ENCODE measurements at regions of chr14 and their contacts with region 1.

Region 1: DNA sequence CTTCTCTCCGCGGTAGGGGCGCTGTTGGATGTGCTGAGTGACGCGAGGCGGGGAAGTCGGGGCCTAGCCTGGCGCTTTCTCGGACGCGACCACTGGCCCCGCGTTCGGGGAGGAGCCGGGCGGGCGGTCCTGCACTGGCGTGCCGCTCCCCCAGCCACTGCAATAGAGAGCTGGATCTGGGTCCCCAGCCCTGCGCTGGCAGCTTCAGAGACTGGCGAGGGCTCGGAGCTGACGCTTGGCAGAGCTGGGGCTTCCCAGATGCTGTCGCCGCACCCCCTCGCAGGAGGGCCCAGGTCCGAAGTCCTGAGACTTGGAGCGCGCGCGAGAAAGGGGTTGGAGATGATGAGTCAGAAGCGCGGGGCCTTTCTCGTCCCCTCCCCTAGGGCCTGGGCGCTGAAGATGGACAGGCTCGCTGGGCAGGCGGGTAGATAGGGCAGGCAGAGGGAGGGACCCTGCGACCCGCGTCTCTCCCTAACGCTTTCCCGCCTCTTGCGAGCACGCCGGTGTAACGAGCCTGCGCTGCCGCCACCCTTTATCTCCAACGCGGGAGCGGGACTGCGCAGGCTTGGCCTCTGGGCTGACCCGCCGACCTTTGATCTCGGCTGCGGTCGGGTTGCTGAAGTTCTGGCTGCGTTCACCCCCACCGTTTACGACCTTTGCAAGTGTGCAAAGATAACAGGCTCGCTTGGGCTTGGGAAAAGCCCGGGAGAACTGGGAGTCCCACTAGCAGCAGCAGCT is 3.0 kb downstream of the TMEM253 start:
- DNase-seq: peak; percentile 95 to 97 (median 96)
- H3K4me3 ChIP-seq: peak overlapping the region; percentile 57
- H3K27ac ChIP-seq: peak overlapping the region; percentile 93 to 96
- H3K4me1 ChIP-seq: peaks cover 4% of the 10 kb centered on the region
- H3K27me3 ChIP-seq: no peaks in the 10 kb centered on the region
- CTCF ChIP-seq: peak; percentile 77 to 95 (median 92)
- EP300 ChIP-seq: no peak
- POLR2A ChIP-seq: peak; percentile 69

Region 2: DNA sequence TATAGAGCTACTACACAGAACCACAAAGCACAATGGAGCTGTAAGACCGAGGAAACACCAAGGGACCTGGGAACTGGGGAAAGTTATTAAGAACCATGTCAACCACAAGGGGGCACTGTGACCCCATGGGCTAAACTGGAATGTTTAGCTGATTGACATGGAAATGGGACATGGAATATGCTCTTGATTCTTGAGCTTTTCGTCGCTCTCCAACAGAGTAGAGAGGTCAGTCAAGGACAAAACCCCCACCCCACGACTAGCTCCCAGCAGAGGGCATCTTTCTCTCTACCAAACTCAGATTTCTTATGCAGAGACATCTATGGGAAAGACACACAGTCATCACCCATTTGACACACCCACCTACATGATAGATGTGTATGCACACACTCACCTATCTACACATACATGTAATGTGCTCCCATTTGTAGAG is 89.1 kb before region 1 on chr14:
- intact Hi-C with region 1: loop called in 1 of 4 experiments (anchors 10 kb)
- DNase-seq: peak; percentile 81 to 92 (median 87)
- H3K4me3 ChIP-seq: no peak overlapping the region
- H3K27ac ChIP-seq: peak overlapping the region in 1 of 2 donors; percentile 16
- H3K4me1 ChIP-seq: peaks cover 5% of the 10 kb centered on the region
- H3K27me3 ChIP-seq: no peaks in the 10 kb centered on the region
- CTCF ChIP-seq: peak; percentile 81 to 97 (median 96)
- EP300 ChIP-seq: no peak
- POLR2A ChIP-seq: no peak

Region 3: DNA sequence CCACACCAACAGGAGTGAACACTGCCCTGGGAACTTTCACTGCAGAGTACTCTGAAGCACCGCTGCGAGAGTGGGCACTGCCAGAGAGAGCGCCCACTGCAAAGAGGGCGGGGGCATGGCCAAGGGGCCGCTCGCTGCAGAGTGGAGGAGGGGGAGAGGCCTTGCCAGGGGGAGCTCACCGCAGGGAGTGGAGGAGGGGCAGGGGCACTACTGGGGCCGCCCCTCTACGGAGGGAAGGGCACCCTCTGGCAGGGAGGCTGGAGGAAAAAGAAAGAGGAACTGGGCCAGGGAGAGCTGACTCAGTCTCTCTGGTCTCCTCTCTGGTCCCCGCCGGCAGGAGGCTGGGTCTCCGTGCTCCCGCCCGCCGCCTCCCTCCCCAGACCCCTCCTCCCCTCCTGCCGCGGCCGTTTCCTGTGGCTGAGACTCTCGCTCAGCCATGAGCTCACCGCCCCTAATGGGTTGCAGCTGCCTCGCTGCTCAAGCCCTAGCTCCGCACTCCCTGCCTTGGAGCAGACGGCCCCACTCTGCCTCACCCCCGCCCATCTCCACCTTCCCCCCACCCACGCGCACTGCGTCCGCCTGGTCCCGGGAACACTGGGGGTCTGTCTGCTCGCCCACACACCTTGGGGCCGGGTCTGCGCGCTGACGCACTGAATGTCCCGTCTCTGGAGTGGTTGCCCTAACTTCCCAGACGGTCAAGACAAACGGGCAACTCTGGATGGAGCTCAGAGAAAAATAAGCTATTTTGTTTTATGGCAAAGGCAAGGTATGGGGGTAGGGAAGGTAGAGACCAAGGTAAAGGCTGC is 32.5 kb before region 1 on chr14:
- intact Hi-C with region 1: loop called (anchors 2 to 5 kb)
- DNase-seq: peak; percentile 85 to 87 (median 86)
- H3K4me3 ChIP-seq: peak overlapping the region; percentile 91
- H3K27ac ChIP-seq: peak overlapping the region; percentile 94 to 95
- H3K4me1 ChIP-seq: peaks cover 1% of the 10 kb centered on the region
- H3K27me3 ChIP-seq: no peaks in the 10 kb centered on the region
- CTCF ChIP-seq: no peak
- EP300 ChIP-seq: no peak
- POLR2A ChIP-seq: no peak

Region 4: GRCh38 chr14:21160061-21160603 is 56.3 kb after region 1 on chr14:
- intact Hi-C with region 1: no loop called
- DNase-seq: no peak
- H3K4me3 ChIP-seq: no peak overlapping the region
- H3K27ac ChIP-seq: no peak overlapping the region
- H3K4me1 ChIP-seq: no peaks in the 10 kb centered on the region
- H3K27me3 ChIP-seq: no peaks in the 10 kb centered on the region
- CTCF ChIP-seq: no peak
- EP300 ChIP-seq: no peak
- POLR2A ChIP-seq: no peak

Region 5: GRCh38 chr14:21269252-21270046 is 165.6 kb after region 1 on chr14 and contains the start of gene HNRNPC:
- intact Hi-C with region 1: loop called in 1 of 4 experiments (anchors 10 kb)
- DNase-seq: peak; percentile 100
- H3K4me3 ChIP-seq: peak within 1 kb of the TSS; percentile 90
- H3K27ac ChIP-seq: peak within 1 kb of the TSS; percentile 91 to 93
- H3K4me1 ChIP-seq: peaks cover 7% of the 10 kb centered on the region
- H3K27me3 ChIP-seq: no peaks in the 10 kb centered on the region
- CTCF ChIP-seq: no peak
- EP300 ChIP-seq: no peak
- POLR2A ChIP-seq: peak; percentile 98
- total RNA-seq, gene HNRNPC: 427 to 633 (median 479) TPM

Measured in ovary (tissue), 10 donors.